Ovary (tissue), 10 donors: ENCODE measurements at regions of chr10 and their contacts with region 1.

Region 1: GRCh38 chr10:33008499-33009243 is 50.6 kb upstream of the ITGB1 start:
- DNase-seq: peak in 3 of 5 donors; percentile 21 to 67 (median 59)
- H3K4me3 ChIP-seq: no peak overlapping the region
- H3K27ac ChIP-seq: no peak overlapping the region
- H3K4me1 ChIP-seq: peaks cover 2% of the 10 kb centered on the region
- H3K27me3 ChIP-seq: no peaks in the 10 kb centered on the region
- CTCF ChIP-seq: peak; percentile 87 to 96 (median 88)
- EP300 ChIP-seq: no peak
- POLR2A ChIP-seq: no peak

Region 2: GRCh38 chr10:32787690-32788284 is 220.9 kb before region 1 on chr10:
- intact Hi-C with region 1: loop called in 2 of 4 experiments (anchors 2 to 5 kb)
- DNase-seq: no peak
- H3K4me3 ChIP-seq: no peak overlapping the region
- H3K27ac ChIP-seq: no peak overlapping the region
- H3K4me1 ChIP-seq: no peaks in the 10 kb centered on the region
- H3K27me3 ChIP-seq: no peaks in the 10 kb centered on the region
- CTCF ChIP-seq: no peak
- EP300 ChIP-seq: no peak
- POLR2A ChIP-seq: no peak

Region 3: GRCh38 chr10:32795598-32796183 is 213.0 kb before region 1 on chr10:
- intact Hi-C with region 1: loop called (anchors 2 to 5 kb)
- DNase-seq: no peak
- H3K4me3 ChIP-seq: no peak overlapping the region
- H3K27ac ChIP-seq: no peak overlapping the region
- H3K4me1 ChIP-seq: no peaks in the 10 kb centered on the region
- H3K27me3 ChIP-seq: no peaks in the 10 kb centered on the region
- CTCF ChIP-seq: peak; percentile 43 to 70 (median 48)
- EP300 ChIP-seq: no peak
- POLR2A ChIP-seq: no peak

Region 4: GRCh38 chr10:33066558-33067236 is 58.0 kb after region 1 on chr10:
- intact Hi-C with region 1: no loop called
- DNase-seq: no peak
- H3K4me3 ChIP-seq: no peak overlapping the region
- H3K27ac ChIP-seq: no peak overlapping the region
- H3K4me1 ChIP-seq: no peaks in the 10 kb centered on the region
- H3K27me3 ChIP-seq: no peaks in the 10 kb centered on the region
- CTCF ChIP-seq: no peak
- EP300 ChIP-seq: no peak
- POLR2A ChIP-seq: no peak

Region 5: DNA sequence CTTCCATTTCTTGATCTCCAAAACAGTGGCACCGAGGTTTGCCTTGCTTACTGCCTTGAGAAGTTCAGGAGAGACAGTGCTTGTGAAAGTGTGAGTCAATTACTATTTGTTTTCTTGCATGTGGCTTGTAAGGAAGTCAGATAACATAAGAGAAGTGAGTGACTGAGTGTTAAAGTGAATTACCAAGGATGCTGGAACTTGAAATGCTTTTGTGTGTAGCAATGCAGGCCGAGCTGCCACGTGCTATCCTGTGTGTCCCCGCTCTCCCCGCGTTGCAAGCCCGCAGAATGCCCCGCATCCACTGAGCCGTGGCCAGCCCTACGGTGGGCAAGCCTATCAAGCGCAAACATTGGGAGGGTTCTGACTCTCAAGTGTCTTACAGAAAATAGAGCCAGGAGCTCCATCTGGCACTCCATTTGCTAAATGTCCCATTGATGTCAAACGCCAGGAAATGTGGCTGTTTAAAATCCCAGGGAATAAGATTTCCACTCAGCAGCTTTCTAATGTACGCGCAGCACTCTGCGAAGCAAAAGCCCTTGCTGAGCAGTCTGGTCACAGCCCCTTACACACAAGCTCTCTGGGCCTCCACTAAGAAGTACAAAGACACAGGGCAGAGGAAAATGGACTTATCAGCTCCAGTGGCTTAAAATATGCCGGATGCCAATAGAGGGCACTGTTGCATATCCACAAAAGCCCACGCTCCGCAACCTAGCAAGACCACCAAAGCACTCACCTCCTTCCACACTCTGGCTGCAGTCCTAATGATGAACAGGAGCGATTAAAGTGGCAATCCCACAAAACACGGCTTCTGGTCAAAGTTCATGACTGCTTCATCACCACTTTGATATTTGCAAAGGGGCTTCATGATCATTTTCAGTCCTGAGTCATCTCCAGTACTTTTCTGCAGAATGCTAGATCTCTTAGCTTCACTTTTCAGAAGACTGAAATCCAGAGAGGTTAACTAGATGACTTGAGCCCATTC is 107.4 kb after region 1 on chr10:
- intact Hi-C with region 1: no loop called
- DNase-seq: peak; percentile 31 to 49 (median 47)
- H3K4me3 ChIP-seq: no peak overlapping the region
- H3K27ac ChIP-seq: no peak overlapping the region
- H3K4me1 ChIP-seq: peaks cover 9% of the 10 kb centered on the region
- H3K27me3 ChIP-seq: no peaks in the 10 kb centered on the region
- CTCF ChIP-seq: peak in 2 of 3 donors; percentile 12 to 38
- EP300 ChIP-seq: no peak
- POLR2A ChIP-seq: no peak